Right ventricle myocardium inferior (tissue), 1 donor: ENCODE measurements at regions of chr17 and their contacts with region 1.

Region 1: GRCh38 chr17:1709971-1710806 is at the start of gene TLCD2:
- DNase-seq: peak; percentile 84
- ATAC-seq: peak; percentile 43
- total RNA-seq, gene TLCD2: 2.4 TPM

Region 2: DNA sequence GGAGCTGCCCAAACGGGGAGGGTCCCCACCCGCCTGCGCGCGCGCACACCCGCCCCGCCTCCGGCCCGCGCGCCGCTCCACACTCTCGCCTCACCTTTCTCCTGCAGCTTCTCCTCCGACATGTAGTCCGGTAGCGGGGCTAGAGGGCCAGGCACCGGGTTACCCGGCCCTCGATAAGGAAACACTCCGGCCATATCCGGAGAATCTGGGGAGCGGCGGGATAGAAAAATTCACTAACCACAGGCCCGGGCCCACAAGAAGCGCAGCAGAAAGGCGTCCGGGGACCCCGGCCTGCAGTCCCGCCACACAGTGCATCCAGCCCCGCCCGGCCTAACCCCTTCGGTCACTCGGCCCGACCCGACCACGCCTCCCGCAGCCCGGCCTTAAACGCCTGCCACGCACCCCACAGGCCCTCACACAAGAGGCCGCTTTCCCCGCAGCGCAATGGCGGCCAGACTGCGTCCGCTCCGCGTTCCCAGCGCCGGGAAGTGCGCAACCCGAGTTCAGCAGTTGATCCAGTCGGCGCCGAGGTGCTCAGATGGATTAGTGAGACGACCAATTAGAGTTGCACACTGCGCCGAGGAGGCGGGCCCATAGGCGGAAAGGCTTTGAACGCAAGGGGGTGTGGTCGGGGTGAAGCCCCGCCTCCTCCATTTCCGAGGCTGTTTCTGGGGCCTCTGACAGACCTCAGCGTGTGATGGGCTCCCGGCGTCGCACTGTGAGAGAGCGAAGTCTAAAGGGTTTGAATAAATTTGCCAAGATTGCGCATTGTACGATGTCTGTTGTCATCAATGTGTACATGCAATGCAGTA is 25.6 kb before region 1 on chr17 and contains the start of gene PRPF8:
- intact Hi-C with region 1: loop called (anchors 2 kb)
- DNase-seq: peak; percentile 98
- ATAC-seq: peak; percentile 100
- total RNA-seq, gene PRPF8: 120 TPM

Region 3: GRCh38 chr17:1769822-1770477 is 59.8 kb after region 1 on chr17:
- intact Hi-C with region 1: no loop called
- DNase-seq: peak; percentile 48
- ATAC-seq: no peak